H1 (cell line): ENCODE measurements at regions of chr1 and their contacts with region 1.

Region 1: GRCh38 chr1:164558461-164559341 is at the start of gene PBX1:
- DNase-seq: peak; percentile 87 to 92
- H3K4me3 ChIP-seq: peak within 1 kb of the TSS; percentile 83 to 95 (median 90)
- H3K27ac ChIP-seq: peak within 1 kb of the TSS; percentile 56; the same call in 1 of the 2 replicates
- H3K4me1 ChIP-seq: peaks cover 0 to 10% (median 4%) of the 10 kb centered on the region in 4 experiments; a peak in 3 of 7 replicates
- H3K27me3 ChIP-seq: no peaks in the 10 kb centered on the region
- CTCF ChIP-seq: no peak
- EP300 ChIP-seq: no peak
- POLR2A ChIP-seq: peak in 1 of 2 experiments; percentile 72; a peak in 2 of 3 replicates
- RAD21 ChIP-seq: no peak
- total RNA-seq, gene PBX1: 118 and 124 TPM in 2 replicates

Region 2: DNA sequence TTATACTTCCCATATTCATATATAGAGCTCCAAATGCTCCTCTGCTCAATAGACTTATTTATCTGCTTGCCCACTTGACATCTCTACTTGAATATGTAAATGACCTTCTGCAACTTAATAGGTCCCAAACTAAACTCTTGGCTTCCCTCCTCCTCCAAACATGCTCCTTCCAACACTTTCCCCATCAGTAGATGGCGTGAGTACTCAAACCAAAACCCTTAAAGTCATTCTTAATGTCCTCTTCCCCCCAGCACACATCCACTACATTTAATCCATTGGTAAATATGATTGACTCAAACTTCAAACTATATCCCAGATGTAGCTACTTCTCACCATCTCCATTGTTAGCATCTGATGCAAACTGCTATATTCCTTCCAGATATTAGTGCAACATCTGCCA is 48.3 kb before region 1 on chr1:
- CTCF ChIA-PET with region 1: no interaction called
- POLR2A ChIA-PET with region 1: no interaction called
- DNase-seq: no peak
- H3K4me3 ChIP-seq: no peak overlapping the region
- H3K27ac ChIP-seq: no peak overlapping the region
- H3K4me1 ChIP-seq: peaks cover 0 to 4% (median 0%) of the 10 kb centered on the region in 4 experiments; a peak in 1 of 7 replicates
- H3K27me3 ChIP-seq: no peaks in the 10 kb centered on the region
- CTCF ChIP-seq: peak in 1 of 3 experiments; percentile 4; a peak in 1 of 4 replicates
- EP300 ChIP-seq: no peak
- POLR2A ChIP-seq: no peak
- RAD21 ChIP-seq: peak; percentile 46 to 61

Region 3: DNA sequence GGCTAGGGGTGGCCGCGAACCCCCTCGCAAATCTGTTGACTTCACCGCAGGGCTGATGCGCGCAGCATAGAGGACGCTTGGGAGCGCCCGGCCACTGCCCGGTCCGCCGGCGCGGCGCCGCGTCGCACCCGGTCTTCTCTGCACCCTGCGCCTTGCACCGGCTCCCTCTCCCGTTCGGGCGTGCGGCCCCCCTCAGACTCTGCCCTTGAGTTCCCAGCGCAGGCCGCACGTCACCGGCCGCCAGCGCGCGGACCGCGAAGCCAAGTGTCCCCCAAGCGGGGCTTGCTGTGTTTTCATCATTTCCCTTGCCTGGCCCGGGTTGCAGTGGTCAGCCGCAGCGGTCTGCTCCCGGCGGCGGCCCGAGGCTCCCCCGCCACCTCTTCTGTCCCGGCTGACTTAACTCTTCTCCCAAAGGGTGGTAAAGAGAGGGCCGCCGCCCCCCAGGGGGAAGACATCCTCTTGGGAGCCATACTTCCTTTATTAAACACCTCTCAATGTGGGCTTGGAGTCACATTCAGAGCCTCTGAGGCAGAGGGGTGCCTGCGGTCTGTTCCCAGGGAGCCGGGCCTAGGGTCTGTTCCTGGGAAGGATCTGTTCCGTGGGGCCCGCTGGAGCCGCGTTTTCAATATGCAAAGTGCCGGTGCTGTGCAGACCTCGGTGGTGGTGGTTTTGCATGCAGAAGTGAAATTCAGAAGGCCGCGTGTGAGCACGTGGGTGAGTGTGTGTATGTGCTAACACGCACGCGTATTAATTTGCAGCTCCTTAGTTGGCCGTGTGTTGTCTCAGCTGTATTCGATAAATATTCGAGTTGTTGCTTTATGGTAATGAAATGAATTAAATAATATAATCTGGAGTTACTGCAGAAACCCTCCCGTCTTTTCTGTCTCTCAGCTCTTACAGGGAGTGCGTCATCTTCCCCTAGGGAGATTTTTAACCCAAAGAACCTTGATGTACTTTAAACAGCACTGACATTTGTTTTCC is 17.9 kb after region 1 on chr1:
- CTCF ChIA-PET with region 1: interaction called, 6 read pairs
- POLR2A ChIA-PET with region 1: interaction called, 10 read pairs
- DNase-seq: peak in 1 of 2 experiments; percentile 68
- H3K4me3 ChIP-seq: peak overlapping the region; percentile 25 to 54 (median 40)
- H3K27ac ChIP-seq: peak overlapping the region; percentile 28; the same call in 1 of the 2 replicates
- H3K4me1 ChIP-seq: peaks cover 21 to 43% (median 35%) of the 10 kb centered on the region in 4 experiments
- H3K27me3 ChIP-seq: no peaks in the 10 kb centered on the region
- CTCF ChIP-seq: no peak
- EP300 ChIP-seq: no peak
- POLR2A ChIP-seq: peak in 1 of 2 experiments; percentile 21; a peak in 1 of 3 replicates
- RAD21 ChIP-seq: 0 out of 4 replicates have a peak, but pooled peaks of 1 of the 2 experiments have one; percentile 3

Region 4: DNA sequence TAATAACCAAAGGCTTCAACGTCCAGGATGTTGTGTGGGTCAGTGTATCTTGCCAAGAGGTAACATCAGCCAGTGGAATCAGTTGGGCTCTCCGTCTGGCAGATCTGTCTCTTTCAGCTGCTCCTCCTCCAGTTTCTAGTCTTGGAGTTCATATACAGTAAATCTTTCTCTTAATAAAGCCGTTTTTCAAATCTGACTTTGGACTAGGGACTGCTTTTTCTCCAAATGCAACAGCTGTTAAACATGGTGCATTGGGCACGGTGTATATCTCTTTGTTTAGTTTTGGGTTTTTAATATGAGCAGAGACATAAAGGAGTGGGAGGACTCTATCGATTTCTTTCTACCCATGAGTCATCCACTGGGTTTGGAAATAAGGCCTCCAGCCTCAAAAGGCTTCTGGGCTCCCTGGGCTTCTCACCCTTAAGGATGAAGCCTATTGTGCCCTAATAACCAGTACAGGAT is 86.1 kb after region 1 on chr1:
- CTCF ChIA-PET with region 1: no interaction called
- POLR2A ChIA-PET with region 1: no interaction called
- DNase-seq: no peak
- H3K4me3 ChIP-seq: no peak overlapping the region
- H3K27ac ChIP-seq: no peak overlapping the region
- H3K4me1 ChIP-seq: peaks cover 8 to 35% (median 20%) of the 10 kb centered on the region in 4 experiments; a peak in 5 of 7 replicates
- H3K27me3 ChIP-seq: no peaks in the 10 kb centered on the region
- CTCF ChIP-seq: no peak
- EP300 ChIP-seq: no peak
- POLR2A ChIP-seq: no peak
- RAD21 ChIP-seq: no peak

Region 5: DNA sequence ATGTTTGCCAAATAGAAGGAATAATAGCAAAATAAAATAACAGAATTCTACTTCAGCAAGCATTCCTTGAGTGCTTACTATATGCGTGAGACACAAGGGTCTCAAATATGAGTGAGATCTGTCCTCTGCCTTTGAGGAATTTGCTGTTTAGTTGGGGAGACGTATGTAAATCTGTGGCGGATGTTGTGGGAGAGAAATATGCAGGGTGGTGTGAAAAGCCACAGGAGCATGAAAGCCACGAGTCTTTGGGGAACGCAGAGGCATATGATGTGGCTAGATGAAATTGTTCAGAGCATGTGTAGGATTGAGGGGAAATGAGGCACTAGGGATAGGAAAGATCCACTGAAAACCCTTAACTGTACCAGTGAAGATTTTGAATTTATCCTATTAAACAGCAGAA is 244.7 kb after region 1 on chr1:
- CTCF ChIA-PET with region 1: no interaction called
- POLR2A ChIA-PET with region 1: no interaction called
- DNase-seq: no peak
- H3K4me3 ChIP-seq: no peak overlapping the region
- H3K27ac ChIP-seq: no peak overlapping the region
- H3K4me1 ChIP-seq: no peaks in the 10 kb centered on the region
- H3K27me3 ChIP-seq: no peaks in the 10 kb centered on the region
- CTCF ChIP-seq: no peak
- EP300 ChIP-seq: no peak
- POLR2A ChIP-seq: no peak
- RAD21 ChIP-seq: no peak